PC-3 (cell line): ENCODE measurements at regions of chr18 and their contacts with region 1.

Region 1: DNA sequence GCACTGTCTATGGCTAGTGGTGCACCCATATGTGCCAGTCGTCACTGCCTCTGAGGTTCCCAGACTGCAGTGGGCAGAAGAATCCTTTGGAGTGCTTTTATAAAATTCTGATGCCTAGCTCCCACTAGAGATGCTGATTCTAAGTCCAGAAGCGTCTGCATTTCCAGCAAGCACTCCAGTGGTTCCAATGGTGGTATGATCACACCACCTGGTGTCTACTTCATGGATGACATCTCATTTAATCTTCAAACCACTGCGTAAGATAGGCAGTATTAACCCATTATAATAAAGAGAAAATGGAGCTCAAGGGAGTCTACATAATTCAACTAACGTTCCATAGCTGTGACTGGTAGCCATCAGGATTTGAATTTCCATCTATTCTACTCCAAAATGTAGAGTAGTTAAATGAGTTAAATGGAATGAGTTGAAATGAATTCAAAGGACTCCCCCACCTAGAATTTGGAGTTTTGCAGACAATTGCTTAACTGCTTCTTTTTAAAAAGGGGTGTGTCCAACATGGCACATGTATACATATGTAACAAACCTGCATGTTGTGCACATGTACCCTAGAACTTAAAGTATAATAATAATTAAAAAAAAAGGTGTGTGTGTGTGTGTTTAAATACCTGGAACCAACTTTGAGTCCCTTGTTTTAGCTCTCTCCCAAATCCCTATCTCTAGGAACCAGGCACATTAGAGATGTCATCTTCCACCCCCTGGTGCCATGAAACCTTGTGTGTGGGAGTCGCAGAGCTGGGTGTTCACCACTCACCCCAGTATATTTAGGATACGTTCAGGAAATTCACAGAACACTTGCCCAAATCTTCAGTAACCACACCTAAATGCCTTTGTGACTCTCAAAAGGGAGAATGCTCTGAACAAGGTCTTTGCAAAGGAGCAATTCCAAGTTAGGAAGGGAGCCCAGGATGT is 14.1 kb downstream of the LAMA3 start:
- DNase-seq: peak; percentile 80
- ATAC-seq: peak; percentile 87
- H3K4me3 ChIP-seq: no peak overlapping the region
- H3K27ac ChIP-seq: peak overlapping the region; percentile 0; the same call in 1 of the 2 replicates
- H3K4me1 ChIP-seq: peaks cover 19% of the 10 kb centered on the region
- H3K27me3 ChIP-seq: no peaks in the 10 kb centered on the region
- CTCF ChIP-seq: peak; percentile 87

Region 2: GRCh38 chr18:23619388-23619881 is 83.9 kb before region 1 on chr18:
- CTCF ChIA-PET with region 1: interaction called, 21 read pairs
- POLR2A ChIA-PET with region 1: no interaction called
- intact Hi-C with region 1: loop called (anchors 1 kb)
- DNase-seq: no peak
- ATAC-seq: peak; percentile 21
- H3K4me3 ChIP-seq: no peak overlapping the region
- H3K27ac ChIP-seq: no peak overlapping the region
- H3K4me1 ChIP-seq: peaks cover 4% of the 10 kb centered on the region; the same call in 1 of the 2 replicates
- H3K27me3 ChIP-seq: no peaks in the 10 kb centered on the region
- CTCF ChIP-seq: no peak

Region 3: DNA sequence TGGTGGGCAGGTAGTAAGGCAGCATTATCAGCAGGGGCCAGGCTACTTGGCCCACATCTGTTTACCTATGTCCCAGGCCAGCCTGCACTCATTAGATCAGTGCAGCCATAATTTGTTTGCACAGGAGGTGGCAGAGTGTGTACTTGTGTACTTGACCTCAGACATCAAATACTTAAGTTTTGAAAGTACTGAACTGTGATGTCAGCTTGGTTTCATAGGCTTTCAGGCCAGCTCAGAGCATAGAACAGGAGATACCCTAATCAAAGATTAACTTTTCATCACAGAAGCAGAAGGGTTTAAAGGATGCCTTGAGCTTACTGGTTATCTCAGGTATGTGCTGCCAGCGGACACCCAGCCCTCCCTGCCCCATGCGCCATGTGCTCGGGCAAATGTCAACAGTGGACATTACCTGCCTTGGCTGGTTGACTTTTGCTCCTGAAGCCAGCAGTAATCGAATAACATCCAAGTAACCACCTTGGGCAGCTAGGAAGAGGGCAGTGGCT is 73.8 kb before region 1 on chr18:
- CTCF ChIA-PET with region 1: interaction called, 38 read pairs
- POLR2A ChIA-PET with region 1: no interaction called
- intact Hi-C with region 1: no loop called
- DNase-seq: peak; percentile 37
- ATAC-seq: peak; percentile 28
- H3K4me3 ChIP-seq: no peak overlapping the region
- H3K27ac ChIP-seq: peak overlapping the region; percentile 98
- H3K4me1 ChIP-seq: peaks cover 49% of the 10 kb centered on the region
- H3K27me3 ChIP-seq: no peaks in the 10 kb centered on the region
- CTCF ChIP-seq: no peak

Region 4: DNA sequence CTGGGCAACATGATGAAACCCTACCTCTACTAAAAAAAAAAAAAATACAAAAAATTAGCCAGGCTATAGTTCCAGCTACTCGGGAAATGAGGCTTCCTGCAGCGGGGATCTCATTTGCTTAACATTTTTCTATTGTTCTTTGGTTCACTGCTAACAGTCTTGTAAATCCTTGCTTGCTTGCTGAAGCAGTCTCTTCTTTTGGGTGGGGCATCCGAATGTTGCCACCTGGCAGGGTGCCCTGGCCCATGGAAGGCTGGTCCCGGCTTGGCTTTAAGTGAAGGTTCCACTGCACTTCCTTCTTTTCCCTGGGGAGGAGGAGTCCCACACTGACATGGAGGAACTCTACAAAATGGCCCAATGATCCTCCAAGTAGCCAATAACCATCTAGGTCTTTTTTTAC is 34.6 kb before region 1 on chr18:
- CTCF ChIA-PET with region 1: interaction called, 3 read pairs
- POLR2A ChIA-PET with region 1: no interaction called
- intact Hi-C with region 1: loop called (anchors 2 kb)
- DNase-seq: peak; percentile 68
- ATAC-seq: peak; percentile 64
- H3K4me3 ChIP-seq: no peak overlapping the region
- H3K27ac ChIP-seq: no peak overlapping the region
- H3K4me1 ChIP-seq: peaks cover 17% of the 10 kb centered on the region
- H3K27me3 ChIP-seq: no peaks in the 10 kb centered on the region
- CTCF ChIP-seq: no peak

Region 5: DNA sequence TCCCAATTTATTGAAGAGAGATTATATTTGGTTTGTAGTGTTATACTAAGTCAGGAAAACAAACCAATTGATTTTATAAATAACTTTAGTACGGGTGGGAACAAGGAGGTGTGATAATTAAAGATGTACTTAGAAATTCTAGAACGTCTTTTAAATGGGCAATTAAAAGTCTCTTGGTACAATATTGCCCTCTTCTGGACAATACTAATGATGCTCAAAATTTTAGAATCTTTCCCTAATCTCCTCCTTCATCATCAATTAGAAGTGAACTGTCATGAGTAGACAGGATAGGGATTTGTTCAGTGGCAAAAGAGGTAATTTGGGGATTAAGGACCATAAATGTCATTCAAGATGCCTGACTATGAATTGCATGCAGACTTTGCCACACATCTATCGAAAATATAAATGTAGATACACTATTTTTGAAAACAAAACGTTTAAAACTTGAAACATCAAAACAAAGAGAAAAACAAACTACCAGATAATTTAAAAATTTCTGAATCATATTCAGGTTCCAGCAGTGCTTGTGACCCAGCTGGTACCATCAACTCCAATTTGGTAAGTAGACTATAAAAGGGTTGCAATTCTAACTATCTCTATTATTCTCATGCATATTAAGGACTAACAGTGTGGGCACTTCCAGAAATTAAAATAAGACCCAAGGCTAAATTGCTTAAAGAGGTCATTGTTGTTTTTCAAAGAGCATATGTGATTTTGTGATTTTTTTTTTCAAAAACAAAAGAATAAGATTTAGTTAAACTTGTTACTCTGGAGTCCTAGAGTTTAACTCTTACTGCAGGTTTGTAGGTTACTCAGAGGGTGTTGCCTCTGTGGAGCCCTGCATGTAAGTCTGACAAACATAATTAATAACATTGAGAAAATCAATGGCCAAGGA is 109.5 kb after region 1 on chr18:
- CTCF ChIA-PET with region 1: interaction called, 3 read pairs
- POLR2A ChIA-PET with region 1: no interaction called
- intact Hi-C with region 1: loop called (anchors 1 kb)
- DNase-seq: peak; percentile 53
- ATAC-seq: 0 out of 2 replicates have a peak, but pooled peaks have one; percentile 29
- H3K4me3 ChIP-seq: no peak overlapping the region
- H3K27ac ChIP-seq: no peak overlapping the region
- H3K4me1 ChIP-seq: no peaks in the 10 kb centered on the region
- H3K27me3 ChIP-seq: no peaks in the 10 kb centered on the region
- CTCF ChIP-seq: peak; percentile 69

Region 6: DNA sequence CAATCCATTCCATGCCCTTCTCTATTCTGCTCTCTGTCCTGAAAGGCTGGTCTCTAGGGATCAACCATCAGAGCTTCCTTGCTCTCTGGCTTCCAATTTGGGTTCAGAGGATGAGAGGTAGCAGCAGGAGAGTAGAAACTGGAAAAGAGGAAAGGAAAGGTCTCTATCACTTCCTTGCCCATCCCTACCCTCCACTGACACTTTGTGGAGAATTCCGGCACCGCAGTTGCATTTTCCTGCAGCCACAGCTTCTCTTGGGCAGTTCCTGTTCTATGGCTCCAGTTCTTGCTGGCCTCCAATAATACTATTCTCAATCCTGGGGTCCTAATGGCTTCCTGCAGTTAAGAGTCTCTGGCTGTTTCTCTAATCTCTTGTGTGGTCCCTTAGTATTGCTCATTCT is 709.8 kb after region 1 on chr18:
- CTCF ChIA-PET with region 1: no interaction called
- POLR2A ChIA-PET with region 1: no interaction called
- intact Hi-C with region 1: no loop called
- DNase-seq: peak; percentile 25
- ATAC-seq: peak; percentile 57
- H3K4me3 ChIP-seq: no peak overlapping the region
- H3K27ac ChIP-seq: no peak overlapping the region
- H3K4me1 ChIP-seq: no peaks in the 10 kb centered on the region
- H3K27me3 ChIP-seq: no peaks in the 10 kb centered on the region
- CTCF ChIP-seq: peak; percentile 49; the same call in 1 of the 2 replicates